Activated B cell treated with CpG ODN at 0.5 μM for 24 hours (primary cell): ENCODE measurements at regions of chr3 and their contacts with region 1.

Region 1: DNA sequence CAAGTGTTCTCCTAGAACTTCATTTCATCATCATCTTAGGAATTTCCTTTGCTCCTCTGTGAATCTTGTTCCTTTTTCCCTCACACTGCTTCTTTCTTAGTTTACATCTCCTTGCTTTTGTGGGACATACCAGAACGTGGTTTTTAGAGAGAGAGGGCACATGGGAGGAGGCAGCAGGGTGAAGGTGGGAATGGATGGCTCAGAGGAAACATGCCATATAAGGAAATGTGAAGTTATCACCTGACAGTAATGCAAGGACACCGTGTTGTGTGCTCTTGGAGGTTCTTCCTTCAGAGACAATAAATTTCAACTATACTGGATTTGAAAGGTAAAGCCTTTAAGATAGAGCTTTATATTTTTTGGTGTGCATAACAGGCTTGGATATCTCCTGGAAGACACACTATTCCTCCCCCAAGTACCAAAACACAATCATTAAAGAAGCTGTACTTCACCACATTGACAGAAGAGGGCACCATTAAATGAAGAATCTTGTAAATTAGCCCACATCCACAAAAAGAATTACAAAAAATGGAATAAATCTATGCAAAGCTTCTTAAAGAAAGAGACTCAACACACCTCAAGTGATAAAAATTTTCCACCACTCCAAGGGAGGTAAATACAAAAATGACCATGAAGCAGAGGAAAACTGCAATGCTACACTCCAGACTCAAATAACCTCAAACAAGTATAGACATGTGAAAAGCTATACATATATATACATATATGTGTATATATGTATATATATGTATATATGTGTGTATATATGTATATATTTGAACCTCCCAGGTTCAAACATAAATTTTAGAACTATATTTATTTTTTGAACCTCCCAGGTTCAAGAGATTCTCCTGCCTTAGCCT is 26.1 kb downstream of the RPL39L start:
- DNase-seq: no peak
- ATAC-seq: peak; percentile 49
- H3K4me3 Mint-ChIP-seq: no peak overlapping the region
- H3K27ac Mint-ChIP-seq: no peak overlapping the region
- H3K4me1 Mint-ChIP-seq: peaks cover 9% of the 10 kb centered on the region
- H3K27me3 Mint-ChIP-seq: no peaks in the 10 kb centered on the region
- CTCF ChIP-seq: no peak

Region 2: GRCh38 chr3:186882881-186883685 is 230.1 kb before region 1 on chr3:
- CTCF ChIA-PET with region 1: no interaction called
- POLR2A ChIA-PET with region 1: no interaction called
- intact Hi-C with region 1: no loop called
- DNase-seq: no peak
- ATAC-seq: no peak
- H3K4me3 Mint-ChIP-seq: no peak overlapping the region
- H3K27ac Mint-ChIP-seq: no peak overlapping the region
- H3K4me1 Mint-ChIP-seq: peaks cover 3% of the 10 kb centered on the region
- H3K27me3 Mint-ChIP-seq: peaks cover 5% of the 10 kb centered on the region
- CTCF ChIP-seq: no peak

Region 3: GRCh38 chr3:187101184-187102072 is 11.7 kb before region 1 on chr3:
- CTCF ChIA-PET with region 1: interaction called, 14 read pairs
- POLR2A ChIA-PET with region 1: no interaction called
- intact Hi-C with region 1: no loop called
- DNase-seq: no peak
- ATAC-seq: peak; percentile 47
- H3K4me3 Mint-ChIP-seq: peak overlapping the region; percentile 73
- H3K27ac Mint-ChIP-seq: peak overlapping the region; percentile 64
- H3K4me1 Mint-ChIP-seq: peaks cover 39% of the 10 kb centered on the region
- H3K27me3 Mint-ChIP-seq: no peaks in the 10 kb centered on the region
- CTCF ChIP-seq: no peak

Region 4: GRCh38 chr3:187130346-187131066 is 17.3 kb after region 1 on chr3:
- CTCF ChIA-PET with region 1: interaction called, 16 read pairs
- POLR2A ChIA-PET with region 1: interaction called, 4 read pairs
- intact Hi-C with region 1: loop called (anchors 2 kb)
- DNase-seq: no peak
- ATAC-seq: peak; percentile 90
- H3K4me3 Mint-ChIP-seq: peak overlapping the region; percentile 76
- H3K27ac Mint-ChIP-seq: peak overlapping the region; percentile 96
- H3K4me1 Mint-ChIP-seq: peaks cover 46% of the 10 kb centered on the region
- H3K27me3 Mint-ChIP-seq: no peaks in the 10 kb centered on the region
- CTCF ChIP-seq: no peak

Region 5: DNA sequence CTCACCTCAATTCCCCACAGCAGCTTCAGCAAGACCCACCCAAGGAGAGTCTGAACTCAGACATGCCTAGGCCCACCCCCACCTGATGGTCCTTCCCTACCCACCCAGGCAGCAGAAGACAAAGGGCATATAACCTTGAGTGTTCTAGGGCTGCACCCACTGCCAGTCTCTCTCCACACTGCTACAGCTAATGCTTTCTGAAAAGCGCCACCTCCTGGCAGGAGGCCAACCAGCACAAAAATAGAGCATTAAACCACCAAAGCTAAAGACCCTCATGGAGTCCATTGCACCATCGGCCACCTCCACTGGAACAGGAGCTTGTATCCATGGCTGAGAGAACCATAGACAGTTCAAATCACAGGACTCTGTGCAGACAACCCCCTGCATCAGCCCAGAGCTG is 37.4 kb after region 1 on chr3:
- CTCF ChIA-PET with region 1: interaction called, 168 read pairs
- POLR2A ChIA-PET with region 1: interaction called, 12 read pairs
- intact Hi-C with region 1: loop called (anchors 1 kb)
- DNase-seq: peak; percentile 54
- ATAC-seq: peak; percentile 66
- H3K4me3 Mint-ChIP-seq: no peak overlapping the region
- H3K27ac Mint-ChIP-seq: no peak overlapping the region
- H3K4me1 Mint-ChIP-seq: no peaks in the 10 kb centered on the region
- H3K27me3 Mint-ChIP-seq: peaks cover 5% of the 10 kb centered on the region
- CTCF ChIP-seq: no peak

Region 6: GRCh38 chr3:187164885-187165543 is 51.9 kb after region 1 on chr3:
- CTCF ChIA-PET with region 1: interaction called, 135 read pairs
- POLR2A ChIA-PET with region 1: interaction called, 13 read pairs
- intact Hi-C with region 1: loop called (anchors 1 kb)
- DNase-seq: no peak
- ATAC-seq: peak; percentile 73
- H3K4me3 Mint-ChIP-seq: no peak overlapping the region
- H3K27ac Mint-ChIP-seq: no peak overlapping the region
- H3K4me1 Mint-ChIP-seq: no peaks in the 10 kb centered on the region
- H3K27me3 Mint-ChIP-seq: peaks cover 14% of the 10 kb centered on the region
- CTCF ChIP-seq: no peak